ENCODE measurements at regions of chr18 and their contacts with region 1.

Region 1: DNA sequence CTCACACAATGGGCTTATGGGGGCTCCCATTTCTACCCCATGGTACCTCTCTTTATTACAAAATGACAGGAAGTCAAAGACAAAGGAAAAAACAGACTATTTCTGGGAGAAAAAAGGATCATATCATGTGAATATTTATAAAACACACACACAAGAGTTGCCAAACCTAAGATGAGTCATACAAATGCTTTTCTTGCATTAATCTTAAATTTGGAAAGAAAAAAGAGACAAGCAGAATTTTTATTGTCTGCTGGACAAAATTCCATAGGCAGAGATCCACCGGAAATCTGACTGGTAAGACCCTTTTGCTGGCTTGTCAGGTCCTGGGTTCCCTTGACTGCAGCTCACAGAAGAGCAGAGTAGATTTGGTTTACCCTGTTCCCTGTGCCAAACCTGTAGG is 1732.3 kb upstream of the PIK3C3 start:
- DNase-seq: peak; percentile 16
- ATAC-seq: no peak
- H3K4me3 ChIP-seq: no peak overlapping the region
- H3K27ac ChIP-seq: no peak overlapping the region
- H3K4me1 ChIP-seq: peaks cover 4% of the 10 kb centered on the region; the same call in 1 of the 2 replicates
- H3K27me3 ChIP-seq: no peaks in the 10 kb centered on the region
- CTCF ChIP-seq: no peak
- POLR2A ChIP-seq: no peak
- RAD21 ChIP-seq: no peak

Region 2: GRCh38 chr18:40179729-40180461 is 42.9 kb before region 1 on chr18:
- CTCF ChIA-PET with region 1: no interaction called
- POLR2A ChIA-PET with region 1: no interaction called
- dilution Hi-C with region 1: no loop called
- in situ Hi-C with region 1: no loop called
- intact Hi-C with region 1: no loop called
- DNase-seq: peak; percentile 0
- ATAC-seq: no peak
- H3K4me3 ChIP-seq: no peak overlapping the region
- H3K27ac ChIP-seq: no peak overlapping the region
- H3K4me1 ChIP-seq: no peaks in the 10 kb centered on the region
- H3K27me3 ChIP-seq: no peaks in the 10 kb centered on the region
- CTCF ChIP-seq: no peak
- POLR2A ChIP-seq: no peak
- RAD21 ChIP-seq: no peak

Region 3: GRCh38 chr18:40937386-40937785 is 714.6 kb after region 1 on chr18:
- CTCF ChIA-PET with region 1: no interaction called
- POLR2A ChIA-PET with region 1: interaction called, 10 read pairs
- dilution Hi-C with region 1: no loop called
- in situ Hi-C with region 1: no loop called
- intact Hi-C with region 1: no loop called
- DNase-seq: peak; percentile 14
- ATAC-seq: no peak
- H3K4me3 ChIP-seq: no peak overlapping the region
- H3K27ac ChIP-seq: no peak overlapping the region
- H3K4me1 ChIP-seq: no peaks in the 10 kb centered on the region
- H3K27me3 ChIP-seq: no peaks in the 10 kb centered on the region
- CTCF ChIP-seq: no peak
- POLR2A ChIP-seq: no peak
- RAD21 ChIP-seq: no peak